Heart right ventricle (tissue), 16 donors: ENCODE measurements at regions of chr13 and their contacts with region 1.

Region 1: GRCh38 chr13:74040200-74040599 is 94.0 kb downstream of the KLF12 start:
- DNase-seq: peak; percentile 33 to 35
- ATAC-seq: peak; percentile 43 to 88 (median 84)
- H3K4me3 ChIP-seq: no peak overlapping the region
- H3K27ac ChIP-seq: no peak overlapping the region
- H3K4me1 ChIP-seq: peaks cover 0 to 49% (median 17%) of the 10 kb centered on the region in 9 donors
- H3K27me3 ChIP-seq: no peaks in the 10 kb centered on the region
- CTCF ChIP-seq: peak; percentile 36 to 65 (median 56)

Region 2: DNA sequence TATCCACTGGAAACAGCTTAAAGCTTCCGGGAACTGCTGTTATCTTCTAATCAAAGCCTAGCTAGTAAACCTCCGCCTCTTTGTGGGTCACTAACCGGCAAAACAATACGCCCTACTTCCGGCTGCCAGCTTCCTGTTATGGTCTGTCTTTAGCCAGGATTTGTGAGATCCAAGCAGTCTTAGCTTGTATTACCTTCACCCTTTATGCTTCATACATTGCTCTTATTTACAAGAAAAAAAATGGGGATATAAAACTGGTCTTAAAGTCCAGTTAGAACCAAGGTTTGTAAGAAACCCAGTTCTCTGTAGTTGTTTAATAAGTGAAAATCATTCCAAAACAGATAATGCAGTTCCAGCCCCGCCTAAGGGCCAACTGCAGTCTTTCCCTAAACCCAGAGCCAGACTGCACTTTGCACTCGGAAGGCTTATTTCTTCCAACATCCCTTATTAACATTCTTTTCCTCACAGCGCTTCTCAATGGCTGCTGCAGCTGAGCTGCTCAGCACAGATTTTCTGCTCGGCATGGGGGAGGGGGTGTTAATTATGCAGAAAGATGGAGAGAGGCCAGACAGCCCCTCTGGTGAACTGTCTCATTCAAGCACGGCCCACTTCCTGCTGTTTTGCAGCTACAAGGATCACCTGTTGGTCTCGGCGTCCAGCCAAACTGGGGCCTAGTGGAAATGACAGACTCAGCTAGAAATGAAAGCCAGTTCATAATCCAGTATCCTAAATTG is 274.4 kb before region 1 on chr13:
- intact Hi-C with region 1: loop called in 1 of 10 experiments (anchors 10 kb)
- DNase-seq: peak; percentile 80 to 93
- ATAC-seq: peak; percentile 72 to 93 (median 86)
- H3K4me3 ChIP-seq: peak overlapping the region in 6 of 10 donors; percentile 6 to 27 (median 16)
- H3K27ac ChIP-seq: peak overlapping the region; percentile 1 to 81 (median 66)
- H3K4me1 ChIP-seq: peaks cover 0 to 37% (median 33%) of the 10 kb centered on the region in 9 donors
- H3K27me3 ChIP-seq: no peaks in the 10 kb centered on the region
- CTCF ChIP-seq: peak in 1 of 9 donors; percentile 18

Region 3: DNA sequence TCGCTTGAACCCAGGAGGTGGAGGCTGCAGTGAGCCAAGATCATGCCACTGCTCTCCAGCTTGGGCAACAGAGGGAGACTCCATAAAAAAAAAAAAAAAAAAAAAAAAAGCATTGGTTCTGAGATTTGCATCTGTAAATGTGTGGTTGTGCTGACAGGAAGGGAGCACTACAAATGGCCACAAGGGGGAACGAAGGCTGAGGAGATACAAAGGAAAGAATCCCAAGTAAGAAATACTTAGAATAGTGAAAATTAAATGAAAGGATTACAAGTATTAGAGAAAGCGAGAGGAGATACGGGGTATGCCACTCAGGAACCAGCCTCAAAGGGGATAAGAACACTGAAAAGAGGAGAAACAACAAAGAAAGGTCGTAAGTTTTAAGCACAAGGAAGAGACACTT is 190.9 kb before region 1 on chr13:
- intact Hi-C with region 1: loop called in 1 of 10 experiments (anchors 10 kb)
- DNase-seq: no peak
- ATAC-seq: peak in 1 of 8 donors; percentile 49
- H3K4me3 ChIP-seq: no peak overlapping the region
- H3K27ac ChIP-seq: no peak overlapping the region
- H3K4me1 ChIP-seq: peaks cover 0 to 21% (median 3%) of the 10 kb centered on the region in 9 donors
- H3K27me3 ChIP-seq: no peaks in the 10 kb centered on the region
- CTCF ChIP-seq: peak in 7 of 9 donors; percentile 30 to 55 (median 41)

Region 4: GRCh38 chr13:74406420-74406819 is 366.2 kb after region 1 on chr13:
- intact Hi-C with region 1: no loop called
- DNase-seq: no peak
- ATAC-seq: no peak
- H3K4me3 ChIP-seq: no peak overlapping the region
- H3K27ac ChIP-seq: no peak overlapping the region
- H3K4me1 ChIP-seq: no peaks in the 10 kb centered on the region
- H3K27me3 ChIP-seq: no peaks in the 10 kb centered on the region
- CTCF ChIP-seq: no peak